Activated CD4-positive, alpha-beta T cell treated with anti-CD3 and anti-CD28 coated beads for 36 hours (primary cell): ENCODE measurements at regions of chr2 and their contacts with region 1.

Region 1: GRCh38 chr2:199488772-199489400 is 31.1 kb upstream of the SATB2 start:
- DNase-seq: peak; percentile 67
- ATAC-seq: peak; percentile 49
- H3K4me3 Mint-ChIP-seq: no peak overlapping the region
- H3K27ac Mint-ChIP-seq: no peak overlapping the region
- H3K4me1 Mint-ChIP-seq: no peaks in the 10 kb centered on the region
- H3K27me3 Mint-ChIP-seq: peaks cover 17% of the 10 kb centered on the region

Region 2: GRCh38 chr2:198374375-198375082 is 1114.4 kb before region 1 on chr2:
- CTCF ChIA-PET with region 1: interaction called, 7 read pairs
- POLR2A ChIA-PET with region 1: no interaction called
- intact Hi-C with region 1: loop called in 1 of 2 experiments (anchors 1 kb)
- DNase-seq: peak; percentile 62
- ATAC-seq: no peak
- H3K4me3 Mint-ChIP-seq: no peak overlapping the region
- H3K27ac Mint-ChIP-seq: no peak overlapping the region
- H3K4me1 Mint-ChIP-seq: peaks cover 9% of the 10 kb centered on the region
- H3K27me3 Mint-ChIP-seq: peaks cover 31% of the 10 kb centered on the region

Region 3: DNA sequence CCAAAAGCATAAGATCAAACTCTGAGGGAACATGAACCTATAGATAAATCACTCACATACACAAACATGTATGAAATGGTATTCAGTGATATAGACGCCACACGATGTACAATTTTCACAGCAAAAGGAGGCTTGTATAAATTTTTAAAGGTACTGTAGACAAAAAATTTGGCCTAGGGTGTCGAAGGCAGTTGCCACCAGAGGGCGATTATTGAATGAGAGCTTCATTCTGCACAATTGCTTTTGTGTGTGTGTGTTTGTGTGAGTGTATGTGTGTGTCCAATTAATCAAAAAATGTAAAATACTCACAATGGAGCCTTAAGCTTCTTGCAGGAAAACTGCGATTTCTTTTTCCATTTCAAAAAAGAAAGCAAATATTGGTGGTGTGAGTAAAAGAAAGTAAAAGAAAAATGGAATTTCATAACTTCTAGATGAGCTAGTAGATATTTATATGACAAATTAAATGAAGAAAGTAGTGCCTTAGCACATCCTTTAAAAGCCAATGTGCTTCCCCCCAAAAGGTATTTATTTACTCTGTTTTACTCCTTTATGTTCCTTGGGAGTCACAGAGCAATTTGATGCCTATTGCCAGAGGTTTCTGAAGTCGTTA is 831.3 kb before region 1 on chr2:
- CTCF ChIA-PET with region 1: no interaction called
- POLR2A ChIA-PET with region 1: no interaction called
- intact Hi-C with region 1: loop called in 1 of 2 experiments (anchors 5 kb)
- DNase-seq: peak; percentile 12
- ATAC-seq: no peak
- H3K4me3 Mint-ChIP-seq: no peak overlapping the region
- H3K27ac Mint-ChIP-seq: no peak overlapping the region
- H3K4me1 Mint-ChIP-seq: no peaks in the 10 kb centered on the region
- H3K27me3 Mint-ChIP-seq: peaks cover 2% of the 10 kb centered on the region

Region 4: GRCh38 chr2:198890490-198890889 is 598.4 kb before region 1 on chr2:
- CTCF ChIA-PET with region 1: no interaction called
- POLR2A ChIA-PET with region 1: no interaction called
- intact Hi-C with region 1: no loop called
- DNase-seq: no peak
- ATAC-seq: no peak
- H3K4me3 Mint-ChIP-seq: no peak overlapping the region
- H3K27ac Mint-ChIP-seq: no peak overlapping the region
- H3K4me1 Mint-ChIP-seq: no peaks in the 10 kb centered on the region
- H3K27me3 Mint-ChIP-seq: no peaks in the 10 kb centered on the region